Colonic mucosa (tissue), 4 donors: ENCODE measurements at regions of chr5 and their contacts with region 1.

Region 1: GRCh38 chr5:155943516-155944407 is 383.2 kb upstream of the SGCD start:
- DNase-seq: peak; percentile 36
- H3K4me3 ChIP-seq: no peak overlapping the region
- H3K27ac ChIP-seq: no peak overlapping the region
- H3K4me1 ChIP-seq: no peaks in the 10 kb centered on the region
- H3K27me3 ChIP-seq: no peaks in the 10 kb centered on the region
- CTCF ChIP-seq: peak; percentile 79

Region 2: DNA sequence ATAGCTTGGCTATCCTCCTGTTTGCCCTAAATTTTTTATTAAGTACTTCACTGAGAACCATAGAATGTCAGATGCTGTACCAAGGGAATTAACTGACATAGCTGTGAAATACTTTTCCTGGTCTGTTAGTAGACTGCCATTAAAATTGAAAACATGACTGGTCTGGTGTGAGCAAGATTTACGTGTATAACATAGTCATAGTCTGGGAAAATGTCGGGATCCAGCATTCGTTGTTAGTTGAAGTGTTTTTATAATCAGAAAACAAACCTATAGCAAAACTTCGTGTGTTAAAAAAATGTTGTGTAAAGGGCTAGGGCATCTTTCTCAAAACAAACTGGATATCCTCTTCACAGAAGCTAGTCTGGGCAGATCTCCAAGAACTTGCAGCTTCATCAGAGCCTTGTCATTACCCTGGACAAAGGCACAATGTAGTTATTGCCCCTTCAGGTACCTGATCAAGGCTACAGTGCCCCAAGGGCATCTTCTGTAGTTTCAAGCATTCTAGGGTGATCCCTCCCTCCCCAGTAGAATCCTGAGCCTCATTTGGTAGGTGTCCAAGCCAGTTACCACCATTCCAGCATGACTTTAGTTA is 71.0 kb before region 1 on chr5:
- intact Hi-C with region 1: no loop called
- DNase-seq: no peak
- H3K4me3 ChIP-seq: no peak overlapping the region
- H3K27ac ChIP-seq: no peak overlapping the region
- H3K4me1 ChIP-seq: no peaks in the 10 kb centered on the region
- H3K27me3 ChIP-seq: no peaks in the 10 kb centered on the region
- CTCF ChIP-seq: no peak

Region 3: DNA sequence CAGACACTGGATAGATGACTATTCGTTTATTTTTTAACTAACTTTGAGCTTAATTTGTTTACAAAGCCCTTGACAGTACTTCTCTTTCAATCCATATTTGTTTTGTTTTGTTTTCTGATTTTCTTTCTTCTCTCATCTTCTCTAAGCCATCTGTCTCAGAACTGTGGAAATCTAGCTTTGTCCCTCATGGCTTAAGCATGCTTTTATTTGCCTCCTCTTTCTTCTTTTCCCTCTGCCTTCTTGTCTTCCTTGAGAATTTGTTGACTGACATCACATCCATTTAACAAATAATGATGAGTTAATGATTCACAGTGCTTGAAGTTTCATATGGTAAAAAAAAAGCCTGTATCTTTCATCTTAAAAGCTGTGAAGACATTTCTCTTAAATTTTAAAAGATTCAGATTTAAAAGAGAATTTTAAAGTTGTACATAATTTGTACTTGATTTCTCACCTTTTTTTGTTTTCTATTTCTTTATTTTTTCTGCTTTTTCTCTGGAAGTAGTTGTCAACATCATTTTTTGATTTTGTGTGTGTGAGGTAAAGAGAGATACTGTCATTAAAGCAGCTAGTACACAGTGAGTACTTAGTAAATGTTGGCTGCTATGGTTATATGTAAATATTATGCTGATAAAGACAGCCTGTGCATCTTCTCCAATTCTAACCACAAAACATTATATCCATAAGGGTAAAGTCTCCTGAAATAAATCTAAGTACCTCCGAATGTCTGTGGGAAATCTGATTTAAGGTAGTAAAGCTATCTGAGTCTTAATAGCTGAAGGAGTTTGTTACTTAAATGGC is 369.3 kb after region 1 on chr5:
- intact Hi-C with region 1: no loop called
- DNase-seq: no peak
- H3K4me3 ChIP-seq: no peak overlapping the region
- H3K27ac ChIP-seq: no peak overlapping the region
- H3K4me1 ChIP-seq: no peaks in the 10 kb centered on the region
- H3K27me3 ChIP-seq: no peaks in the 10 kb centered on the region
- CTCF ChIP-seq: no peak

Region 4: GRCh38 chr5:156394642-156395305 is 451.0 kb after region 1 on chr5:
- intact Hi-C with region 1: no loop called
- DNase-seq: no peak
- H3K4me3 ChIP-seq: no peak overlapping the region
- H3K27ac ChIP-seq: no peak overlapping the region
- H3K4me1 ChIP-seq: no peaks in the 10 kb centered on the region
- H3K27me3 ChIP-seq: no peaks in the 10 kb centered on the region
- CTCF ChIP-seq: no peak

Region 5: GRCh38 chr5:156420665-156421064 is 476.9 kb after region 1 on chr5:
- intact Hi-C with region 1: no loop called
- DNase-seq: no peak
- H3K4me3 ChIP-seq: no peak overlapping the region
- H3K27ac ChIP-seq: no peak overlapping the region
- H3K4me1 ChIP-seq: no peaks in the 10 kb centered on the region
- H3K27me3 ChIP-seq: no peaks in the 10 kb centered on the region
- CTCF ChIP-seq: no peak

Region 6: GRCh38 chr5:156824800-156825199 is 881.0 kb after region 1 on chr5:
- intact Hi-C with region 1: loop called (anchors 5 kb)
- DNase-seq: no peak
- H3K4me3 ChIP-seq: no peak overlapping the region
- H3K27ac ChIP-seq: no peak overlapping the region
- H3K4me1 ChIP-seq: no peaks in the 10 kb centered on the region
- H3K27me3 ChIP-seq: no peaks in the 10 kb centered on the region
- CTCF ChIP-seq: no peak